ENCODE measurements at regions of chr11 and their contacts with region 1.

Region 1: GRCh38 chr11:11876458-11876857 is 34.7 kb downstream of the USP47 start:
- DNase-seq: no peak
- H3K4me3 ChIP-seq: no peak overlapping the region
- H3K27ac ChIP-seq: no peak overlapping the region
- H3K4me1 ChIP-seq: peaks cover 2 to 7% (median 5%) of the 10 kb centered on the region in 4 experiments; a peak in 6 of 7 replicates
- H3K27me3 ChIP-seq: no peaks in the 10 kb centered on the region
- CTCF ChIP-seq: peak; percentile 7 to 66 (median 50)
- EP300 ChIP-seq: no peak
- POLR2A ChIP-seq: no peak
- RAD21 ChIP-seq: peak; percentile 51 to 55; a peak in 3 of 4 replicates

Region 2: DNA sequence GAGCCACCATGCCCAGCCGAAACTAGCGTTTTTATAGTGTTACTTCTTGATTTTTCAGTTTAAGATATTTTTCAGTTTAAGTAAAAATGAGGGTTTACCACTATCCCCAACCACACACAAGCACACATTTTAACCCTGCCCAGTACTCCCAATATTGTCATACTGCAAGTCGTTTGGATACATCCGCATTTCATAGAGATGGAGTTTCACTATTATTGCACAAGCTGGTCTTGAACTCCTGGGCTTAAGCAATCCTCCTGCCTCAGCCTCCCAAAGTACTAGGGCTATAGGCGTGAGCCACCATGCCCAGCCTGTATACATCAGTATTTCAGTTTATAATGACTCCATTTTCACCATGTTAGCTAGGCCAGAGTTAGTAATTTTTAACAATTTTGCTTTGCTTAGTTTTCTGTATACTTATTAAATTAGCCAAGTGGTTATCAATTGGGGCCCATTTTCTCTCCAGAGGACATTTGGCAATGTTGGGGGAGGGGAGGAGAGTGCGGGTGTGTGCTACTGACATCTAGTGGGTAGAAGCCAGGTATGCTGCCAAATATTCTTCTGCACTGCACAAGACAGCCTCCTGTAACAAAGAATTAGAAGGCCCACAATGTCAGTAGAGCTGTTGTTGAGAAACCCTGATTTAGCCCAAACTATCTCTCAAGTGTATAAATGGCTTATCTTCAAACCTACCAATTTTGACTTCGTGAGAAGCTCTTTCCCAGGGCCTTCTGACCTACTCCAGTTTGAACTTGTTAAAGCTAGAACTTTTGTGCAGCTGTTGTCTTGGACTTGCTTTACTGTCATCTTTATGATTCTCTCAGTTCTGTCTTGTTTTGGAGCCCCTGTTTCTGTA is 27.3 kb before region 1 on chr11:
- CTCF ChIA-PET with region 1: interaction called, 12 read pairs
- POLR2A ChIA-PET with region 1: interaction called, 3 read pairs
- DNase-seq: no peak
- H3K4me3 ChIP-seq: no peak overlapping the region
- H3K27ac ChIP-seq: no peak overlapping the region
- H3K4me1 ChIP-seq: peaks cover 0 to 9% (median 4%) of the 10 kb centered on the region in 4 experiments; a peak in 4 of 7 replicates
- H3K27me3 ChIP-seq: no peaks in the 10 kb centered on the region
- CTCF ChIP-seq: peak; percentile 60 to 78 (median 73)
- EP300 ChIP-seq: no peak
- POLR2A ChIP-seq: no peak
- RAD21 ChIP-seq: peak; percentile 53 to 60

Region 3: GRCh38 chr11:11993839-11994238 is 117.4 kb after region 1 on chr11:
- CTCF ChIA-PET with region 1: no interaction called
- POLR2A ChIA-PET with region 1: no interaction called
- DNase-seq: no peak
- H3K4me3 ChIP-seq: no peak overlapping the region
- H3K27ac ChIP-seq: no peak overlapping the region
- H3K4me1 ChIP-seq: no peaks in the 10 kb centered on the region
- H3K27me3 ChIP-seq: no peaks in the 10 kb centered on the region
- CTCF ChIP-seq: no peak
- EP300 ChIP-seq: no peak
- POLR2A ChIP-seq: no peak
- RAD21 ChIP-seq: no peak

Region 4: DNA sequence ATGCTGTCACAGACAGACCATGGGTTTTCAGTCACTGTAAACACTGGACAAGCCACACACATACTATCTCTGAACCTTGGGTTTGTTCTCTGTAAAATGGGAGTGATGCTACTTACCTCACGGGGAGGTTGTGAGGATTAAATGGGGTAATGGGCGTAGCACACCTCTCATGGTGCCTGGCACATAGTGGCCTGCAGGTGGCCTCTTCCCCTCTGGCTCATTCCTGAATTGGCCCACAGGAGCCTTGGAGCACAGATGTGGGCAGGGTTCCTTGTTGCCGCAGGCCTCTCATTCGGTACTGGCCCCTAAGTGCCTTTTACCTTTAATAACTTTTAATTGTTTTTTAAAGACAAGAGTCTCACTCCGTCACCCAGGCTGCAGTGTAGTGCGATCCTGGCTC is 245.6 kb after region 1 on chr11:
- CTCF ChIA-PET with region 1: no interaction called
- POLR2A ChIA-PET with region 1: no interaction called
- DNase-seq: peak in 1 of 2 experiments; percentile 58
- H3K4me3 ChIP-seq: no peak overlapping the region
- H3K27ac ChIP-seq: no peak overlapping the region
- H3K4me1 ChIP-seq: no peaks in the 10 kb centered on the region
- H3K27me3 ChIP-seq: 0 out of 7 replicates have a peak, but pooled peaks cover 0 to 3% (median 0%) of the 10 kb centered on the region in 4 experiments
- CTCF ChIP-seq: peak; percentile 81 to 93 (median 87)
- EP300 ChIP-seq: no peak
- POLR2A ChIP-seq: no peak
- RAD21 ChIP-seq: peak; percentile 72 to 80

Measured in H1 (cell line).